Thyroid gland (tissue), 4 donors: ENCODE measurements at regions of chr1 and their contacts with region 1.

Region 1: DNA sequence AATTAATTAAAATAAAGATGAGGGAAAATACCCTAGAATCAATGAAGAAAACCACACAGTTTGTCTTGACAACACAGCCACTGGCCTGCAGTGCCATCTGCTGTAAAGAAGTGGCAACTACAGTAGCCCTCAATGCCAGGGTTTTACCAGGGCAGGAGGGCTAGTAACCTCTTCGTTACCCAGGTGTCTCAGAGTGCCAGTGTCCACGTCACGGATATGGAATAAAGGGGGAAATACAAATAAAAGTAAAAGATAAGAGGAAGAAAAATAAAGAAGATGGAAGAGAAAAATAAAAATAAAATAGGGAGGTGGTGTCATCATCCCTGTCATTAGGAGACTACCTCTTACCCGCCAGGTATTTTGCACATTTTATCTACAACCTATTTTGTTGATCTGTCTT is 14.2 kb upstream of the SLC44A3 start:
- DNase-seq: peak; percentile 53 to 54
- H3K4me3 ChIP-seq: no peak overlapping the region
- H3K27ac ChIP-seq: no peak overlapping the region
- H3K4me1 ChIP-seq: peaks cover 5 to 13% of the 10 kb centered on the region in 2 donors
- H3K27me3 ChIP-seq: no peaks in the 10 kb centered on the region
- CTCF ChIP-seq: peak; percentile 94 to 99 (median 97)
- POLR2A ChIP-seq: no peak

Region 2: GRCh38 chr1:94522304-94522703 is 283.6 kb before region 1 on chr1:
- intact Hi-C with region 1: loop called (anchors 5 kb)
- DNase-seq: peak; percentile 23 to 26
- H3K4me3 ChIP-seq: no peak overlapping the region
- H3K27ac ChIP-seq: no peak overlapping the region
- H3K4me1 ChIP-seq: peaks cover 0 to 2% of the 10 kb centered on the region in 2 donors
- H3K27me3 ChIP-seq: no peaks in the 10 kb centered on the region
- CTCF ChIP-seq: peak in 4 of 6 experiments; percentile 46 to 63 (median 52)
- POLR2A ChIP-seq: no peak

Region 3: GRCh38 chr1:94648225-94649007 is 157.5 kb before region 1 on chr1:
- intact Hi-C with region 1: no loop called
- DNase-seq: peak in 1 of 2 donors; percentile 22
- H3K4me3 ChIP-seq: no peak overlapping the region
- H3K27ac ChIP-seq: no peak overlapping the region
- H3K4me1 ChIP-seq: no peaks in the 10 kb centered on the region
- H3K27me3 ChIP-seq: no peaks in the 10 kb centered on the region
- CTCF ChIP-seq: no peak
- POLR2A ChIP-seq: no peak